Posterior cingulate gyrus (tissue), 11 donors: ENCODE measurements at regions of chr14 and their contacts with region 1.

Region 1: DNA sequence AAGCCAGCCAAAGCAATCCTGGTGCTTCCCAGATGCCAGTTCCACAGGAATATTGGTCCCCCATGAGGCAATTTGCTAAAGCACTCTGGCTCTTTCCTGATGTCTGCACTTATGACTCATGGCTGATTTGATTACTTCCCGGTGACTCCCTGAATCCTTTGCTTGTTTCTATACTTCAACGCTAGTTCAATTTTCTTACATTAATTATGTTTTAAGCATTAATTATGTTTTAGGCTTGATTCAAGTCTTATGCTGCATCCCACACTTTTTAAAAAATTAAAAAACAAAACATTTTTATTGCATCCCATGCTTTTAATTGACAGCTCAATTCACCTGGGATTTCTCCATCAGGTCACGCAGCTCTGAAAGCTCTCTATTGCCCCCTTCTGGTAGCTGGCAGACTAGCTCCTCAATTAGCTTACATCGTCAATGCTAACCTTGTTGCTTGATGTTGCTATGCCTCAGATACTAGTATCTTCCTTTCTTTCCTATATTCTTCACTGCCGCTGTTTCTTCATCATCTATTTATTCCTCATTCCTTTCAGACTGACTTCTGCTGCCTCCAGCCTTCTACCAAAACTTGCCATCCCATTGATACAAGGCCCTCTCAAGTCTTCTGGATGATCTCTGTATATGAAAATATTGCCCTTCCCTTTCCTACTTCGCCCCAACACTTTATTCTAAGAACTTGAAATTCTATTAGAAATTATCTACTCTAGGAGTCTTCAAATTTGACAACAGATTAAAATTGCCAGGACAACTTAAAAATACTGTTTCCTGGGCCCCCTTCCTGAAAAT is 32.0 kb downstream of the TSHR start:
- DNase-seq: peak in 8 of 10 donors; percentile 11 to 90 (median 65)

Region 2: GRCh38 chr14:80954687-80955299 is 32.6 kb before region 1 on chr14:
- intact Hi-C with region 1: loop called (anchors 1 kb)
- DNase-seq: peak; percentile 57 to 95 (median 82)